ENCODE measurements at regions of chr18 and their contacts with region 1.

Region 1: GRCh38 chr18:59070181-59070912 is 69.3 kb upstream of the SEC11C start:
- DNase-seq: peak; percentile 77
- ATAC-seq: peak; percentile 96
- H3K4me3 ChIP-seq: no peak overlapping the region
- H3K27ac ChIP-seq: no peak overlapping the region
- H3K4me1 ChIP-seq: no peaks in the 10 kb centered on the region
- H3K27me3 ChIP-seq: no peaks in the 10 kb centered on the region
- CTCF ChIP-seq: peak; percentile 79 to 90 (median 86)
- POLR2A ChIP-seq: no peak
- RAD21 ChIP-seq: peak; percentile 79

Region 2: DNA sequence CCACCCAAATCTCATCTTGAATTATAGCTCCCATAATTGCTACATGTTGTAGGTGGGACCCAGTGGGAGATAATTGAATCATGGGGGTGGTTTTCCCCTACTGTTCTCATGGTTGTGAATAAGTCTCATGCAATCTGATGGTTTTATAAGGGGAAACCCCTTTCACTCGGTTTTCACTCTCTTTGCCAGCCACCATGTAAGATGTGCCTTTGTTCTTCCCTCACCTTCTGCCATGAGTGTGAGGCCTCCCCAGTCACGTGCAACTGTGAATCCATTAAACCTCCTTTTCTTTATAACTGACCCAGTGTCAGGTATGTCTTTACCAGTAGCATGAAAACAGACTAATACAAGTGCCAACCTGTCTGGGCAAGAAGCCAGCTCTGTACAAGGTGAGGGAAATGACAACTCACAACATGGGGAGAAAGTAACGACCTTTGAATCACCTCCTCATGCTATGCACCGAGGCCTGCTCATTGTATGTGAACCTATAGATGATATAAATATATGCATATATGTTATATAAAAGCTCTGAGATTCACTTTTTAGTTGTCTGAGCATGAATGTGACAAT is 603.6 kb before region 1 on chr18:
- CTCF ChIA-PET with region 1: no interaction called
- POLR2A ChIA-PET with region 1: no interaction called
- RAD21 ChIA-PET with region 1: no interaction called
- intact Hi-C with region 1: no loop called
- DNase-seq: no peak
- ATAC-seq: no peak
- H3K4me3 ChIP-seq: no peak overlapping the region
- H3K27ac ChIP-seq: no peak overlapping the region
- H3K4me1 ChIP-seq: no peaks in the 10 kb centered on the region; a peak in 1 of 4 replicates
- H3K27me3 ChIP-seq: peaks cover 19% of the 10 kb centered on the region
- CTCF ChIP-seq: no peak
- POLR2A ChIP-seq: no peak
- RAD21 ChIP-seq: no peak

Region 3: DNA sequence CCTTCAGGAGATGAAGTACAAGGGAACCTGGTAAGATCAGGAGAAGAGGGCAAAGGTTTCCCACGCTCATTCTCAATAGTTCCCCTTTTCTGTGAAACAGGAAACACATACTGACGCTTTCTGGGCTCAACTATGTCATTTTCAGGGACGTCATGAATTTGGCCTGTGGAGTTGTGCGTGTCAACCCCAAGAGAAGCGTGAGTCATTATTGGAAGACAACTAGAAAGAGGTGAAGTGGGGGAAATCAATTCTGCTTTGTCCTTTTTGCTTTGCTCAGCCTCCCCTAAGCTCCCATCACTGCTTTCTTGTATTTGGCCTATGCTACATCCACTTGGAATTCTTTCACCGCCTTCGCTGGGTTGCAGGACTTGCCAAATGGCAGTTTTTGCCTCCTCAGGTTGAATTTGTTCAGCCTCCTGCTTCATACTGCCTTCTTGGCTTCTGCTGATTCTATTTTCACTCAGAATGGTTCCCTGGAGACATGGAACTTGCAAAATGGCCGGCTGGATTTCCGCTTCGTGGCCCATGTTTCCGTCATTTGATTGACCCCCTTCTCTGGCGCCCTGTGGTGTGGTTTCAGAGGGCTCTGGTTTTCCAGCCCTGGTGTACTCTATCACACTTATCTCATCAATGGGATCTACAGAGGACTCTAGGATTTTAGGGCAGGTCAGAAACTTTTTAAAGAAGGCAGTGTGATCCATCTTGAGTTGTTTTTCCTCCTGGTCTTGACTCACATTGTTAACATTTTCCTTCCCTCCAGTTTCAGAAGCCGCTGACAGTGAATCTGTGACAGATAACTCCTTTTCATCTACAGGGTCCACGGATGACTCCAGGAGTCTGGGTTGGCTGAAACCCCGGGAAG is 534.8 kb before region 1 on chr18:
- CTCF ChIA-PET with region 1: no interaction called
- POLR2A ChIA-PET with region 1: no interaction called
- RAD21 ChIA-PET with region 1: no interaction called
- intact Hi-C with region 1: loop called (anchors 5 kb)
- DNase-seq: no peak
- ATAC-seq: no peak
- H3K4me3 ChIP-seq: no peak overlapping the region
- H3K27ac ChIP-seq: no peak overlapping the region
- H3K4me1 ChIP-seq: peaks cover 3 to 22% of the 10 kb centered on the region in 2 experiments
- H3K27me3 ChIP-seq: no peaks in the 10 kb centered on the region
- CTCF ChIP-seq: no peak
- POLR2A ChIP-seq: no peak
- RAD21 ChIP-seq: no peak

Region 4: DNA sequence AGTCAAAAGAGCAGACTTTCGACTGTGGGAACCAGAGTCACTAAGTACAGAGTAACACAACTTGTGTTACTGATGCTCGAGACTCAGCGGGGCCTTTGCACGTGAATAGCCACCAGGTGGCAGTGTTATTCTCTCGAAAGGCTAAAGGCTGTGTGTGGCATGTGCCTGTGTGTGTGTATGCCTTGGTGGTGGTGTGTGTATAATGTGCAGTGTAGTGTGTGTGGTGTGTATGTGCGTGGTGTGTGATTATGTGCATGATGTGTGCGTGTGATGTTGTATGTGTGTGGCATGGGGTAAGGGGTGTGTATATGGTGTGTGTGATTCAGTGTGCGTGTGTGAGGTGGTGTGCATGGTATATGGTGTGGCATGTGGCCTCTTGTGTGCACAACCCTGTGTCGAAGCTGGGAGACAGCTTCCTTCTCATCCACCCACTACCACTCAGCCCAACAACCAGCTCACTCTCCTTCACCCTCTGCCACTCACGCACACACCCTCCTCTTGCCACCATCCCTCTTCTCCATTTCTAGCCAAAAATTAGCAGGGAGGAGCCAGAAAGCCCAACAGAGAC is 288.6 kb before region 1 on chr18:
- CTCF ChIA-PET with region 1: interaction called, 31 read pairs
- POLR2A ChIA-PET with region 1: no interaction called
- RAD21 ChIA-PET with region 1: interaction called, 4 to 7 read pairs
- intact Hi-C with region 1: loop called (anchors 1 kb)
- DNase-seq: peak; percentile 69
- ATAC-seq: peak; percentile 63
- H3K4me3 ChIP-seq: no peak overlapping the region
- H3K27ac ChIP-seq: no peak overlapping the region
- H3K4me1 ChIP-seq: peaks cover 12 to 26% of the 10 kb centered on the region in 2 experiments
- H3K27me3 ChIP-seq: peaks cover 23% of the 10 kb centered on the region
- CTCF ChIP-seq: peak; percentile 81 to 93 (median 91)
- POLR2A ChIP-seq: no peak
- RAD21 ChIP-seq: peak; percentile 97

Region 5: GRCh38 chr18:59085797-59086196 is 15.4 kb after region 1 on chr18:
- CTCF ChIA-PET with region 1: interaction called, 23 read pairs
- POLR2A ChIA-PET with region 1: no interaction called
- RAD21 ChIA-PET with region 1: no interaction called
- intact Hi-C with region 1: no loop called
- DNase-seq: no peak
- ATAC-seq: no peak
- H3K4me3 ChIP-seq: no peak overlapping the region
- H3K27ac ChIP-seq: no peak overlapping the region
- H3K4me1 ChIP-seq: no peaks in the 10 kb centered on the region
- H3K27me3 ChIP-seq: peaks cover 4% of the 10 kb centered on the region
- CTCF ChIP-seq: no peak
- POLR2A ChIP-seq: no peak
- RAD21 ChIP-seq: no peak

Region 6: GRCh38 chr18:59109375-59109774 is 39.0 kb after region 1 on chr18:
- CTCF ChIA-PET with region 1: no interaction called
- POLR2A ChIA-PET with region 1: no interaction called
- RAD21 ChIA-PET with region 1: no interaction called
- intact Hi-C with region 1: no loop called
- DNase-seq: no peak
- ATAC-seq: no peak
- H3K4me3 ChIP-seq: no peak overlapping the region
- H3K27ac ChIP-seq: no peak overlapping the region
- H3K4me1 ChIP-seq: no peaks in the 10 kb centered on the region
- H3K27me3 ChIP-seq: peaks cover 87% of the 10 kb centered on the region
- CTCF ChIP-seq: no peak
- POLR2A ChIP-seq: no peak
- RAD21 ChIP-seq: no peak

Measured in HCT116 (cell line).